CD8-positive, alpha-beta T cell (primary cell): ENCODE measurements at regions of chr6 and their contacts with region 1.

Region 1: DNA sequence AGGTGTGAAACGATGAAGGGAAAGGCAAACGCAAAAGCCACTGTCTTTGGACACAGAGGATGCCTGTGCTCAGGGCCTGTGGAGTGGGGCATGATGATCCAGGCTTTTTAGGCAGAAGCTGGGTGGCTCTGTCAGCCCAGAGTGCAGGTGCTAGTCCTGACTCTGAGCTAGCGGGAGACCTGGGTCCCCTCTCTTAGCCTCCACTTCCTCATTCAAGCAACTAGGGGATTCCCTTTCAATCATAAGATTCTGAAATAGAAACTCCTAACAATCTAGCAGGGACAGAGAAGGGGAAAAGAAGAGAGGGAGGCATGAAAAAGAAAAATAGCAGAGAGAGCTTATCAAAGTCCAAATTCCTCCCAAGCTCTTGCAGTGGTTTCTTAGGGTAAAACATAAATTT is 7.6 kb upstream of the HIVEP2 start:
- DNase-seq: peak in 1 of 9 experiments; percentile 24
- ATAC-seq: no peak
- H3K4me3 ChIP-seq: no peak overlapping the region
- H3K4me3 Mint-ChIP-seq: no peak overlapping the region
- H3K27ac ChIP-seq: no peak overlapping the region
- H3K27ac Mint-ChIP-seq: peak overlapping the region; percentile 79
- H3K4me1 ChIP-seq: no peaks in the 10 kb centered on the region
- H3K4me1 Mint-ChIP-seq: peaks cover 18% of the 10 kb centered on the region
- H3K27me3 ChIP-seq: no peaks in the 10 kb centered on the region
- H3K27me3 Mint-ChIP-seq: no peaks in the 10 kb centered on the region
- CTCF ChIP-seq: no peak

Region 2: DNA sequence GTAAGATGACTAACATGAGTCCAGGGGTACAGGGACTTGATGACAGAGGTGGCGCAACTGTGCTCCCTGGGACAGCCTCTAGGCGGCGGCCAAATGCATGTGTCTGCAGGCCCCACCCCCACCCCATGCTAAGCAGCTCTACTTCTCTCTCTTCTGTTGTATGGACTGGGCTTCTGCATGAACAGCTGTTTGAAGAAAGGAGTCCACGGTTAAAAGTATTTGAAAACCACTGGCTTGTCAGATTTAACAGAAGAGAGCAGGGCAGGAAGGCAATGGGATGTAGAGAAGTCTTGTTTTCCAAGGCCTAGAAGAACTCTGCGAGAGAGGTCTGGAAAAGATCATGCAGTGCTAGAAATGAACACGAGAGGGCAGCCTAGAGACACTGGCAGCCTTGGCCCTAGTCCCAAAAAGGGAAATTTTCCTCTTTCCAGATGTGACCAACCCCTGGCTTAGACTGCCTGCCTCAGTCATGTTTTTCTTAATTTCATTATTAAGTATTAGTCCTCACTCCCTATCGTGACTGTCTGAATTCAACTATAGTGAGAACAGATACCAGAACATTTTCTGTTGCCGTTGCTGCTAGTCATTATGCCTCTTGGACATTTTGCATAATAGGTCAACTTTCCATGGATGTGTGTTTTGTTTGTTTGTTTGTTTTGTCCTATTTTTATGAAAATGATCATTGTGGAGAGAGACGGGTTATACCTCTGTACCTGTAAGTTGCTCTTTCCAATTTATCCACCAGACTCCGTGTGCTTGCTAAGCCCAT is 385.8 kb before region 1 on chr6:
- CTCF ChIA-PET with region 1: no interaction called
- POLR2A ChIA-PET with region 1: no interaction called
- intact Hi-C with region 1: loop called in 1 of 2 experiments (anchors 10 kb)
- DNase-seq: peak; percentile 22 to 72 (median 58)
- ATAC-seq: peak; percentile 57
- H3K4me3 ChIP-seq: no peak overlapping the region
- H3K4me3 Mint-ChIP-seq: no peak overlapping the region
- H3K27ac ChIP-seq: no peak overlapping the region
- H3K27ac Mint-ChIP-seq: no peak overlapping the region
- H3K4me1 ChIP-seq: peaks cover 47% of the 10 kb centered on the region
- H3K4me1 Mint-ChIP-seq: peaks cover 61% of the 10 kb centered on the region
- H3K27me3 ChIP-seq: no peaks in the 10 kb centered on the region
- H3K27me3 Mint-ChIP-seq: no peaks in the 10 kb centered on the region
- CTCF ChIP-seq: peak; percentile 75

Region 3: GRCh38 chr6:142746524-142746923 is 206.1 kb before region 1 on chr6:
- CTCF ChIA-PET with region 1: interaction called, 4 read pairs
- POLR2A ChIA-PET with region 1: no interaction called
- intact Hi-C with region 1: loop called (anchors 1 to 5 kb)
- DNase-seq: peak in 8 of 9 experiments; percentile 6 to 71 (median 39)
- ATAC-seq: peak; percentile 58
- H3K4me3 ChIP-seq: no peak overlapping the region
- H3K4me3 Mint-ChIP-seq: no peak overlapping the region
- H3K27ac ChIP-seq: no peak overlapping the region
- H3K27ac Mint-ChIP-seq: no peak overlapping the region
- H3K4me1 ChIP-seq: peaks cover 6% of the 10 kb centered on the region
- H3K4me1 Mint-ChIP-seq: peaks cover 15% of the 10 kb centered on the region
- H3K27me3 ChIP-seq: no peaks in the 10 kb centered on the region
- H3K27me3 Mint-ChIP-seq: no peaks in the 10 kb centered on the region
- CTCF ChIP-seq: peak; percentile 42

Region 4: DNA sequence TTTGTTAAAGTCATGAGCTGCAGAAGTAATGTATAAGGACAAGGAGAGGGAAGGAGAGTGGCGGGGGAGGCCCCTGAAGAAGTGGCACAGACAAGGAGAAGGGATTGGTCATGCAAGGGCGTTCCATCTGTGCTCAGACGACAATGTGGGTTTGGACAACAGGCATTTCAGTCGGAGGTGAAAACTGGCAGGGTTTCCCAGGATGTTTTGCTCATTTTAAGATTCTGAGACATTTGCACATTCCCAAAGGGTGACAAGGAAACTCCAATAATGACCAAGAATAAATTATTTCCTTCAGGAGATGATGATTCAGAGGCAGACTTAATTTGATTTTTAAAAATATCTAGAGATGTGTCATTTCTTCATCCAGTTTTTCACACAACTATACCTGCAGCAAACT is 189.4 kb before region 1 on chr6:
- CTCF ChIA-PET with region 1: interaction called, 3 read pairs
- POLR2A ChIA-PET with region 1: no interaction called
- intact Hi-C with region 1: loop called in 1 of 2 experiments (anchors 5 kb)
- DNase-seq: no peak
- ATAC-seq: no peak
- H3K4me3 ChIP-seq: no peak overlapping the region
- H3K4me3 Mint-ChIP-seq: no peak overlapping the region
- H3K27ac ChIP-seq: no peak overlapping the region
- H3K27ac Mint-ChIP-seq: peak overlapping the region; percentile 74
- H3K4me1 ChIP-seq: peaks cover 3% of the 10 kb centered on the region
- H3K4me1 Mint-ChIP-seq: peaks cover 37% of the 10 kb centered on the region
- H3K27me3 ChIP-seq: no peaks in the 10 kb centered on the region
- H3K27me3 Mint-ChIP-seq: no peaks in the 10 kb centered on the region
- CTCF ChIP-seq: no peak

Region 5: GRCh38 chr6:142913511-142914047 is 39.0 kb before region 1 on chr6:
- CTCF ChIA-PET with region 1: no interaction called
- POLR2A ChIA-PET with region 1: interaction called, 3 read pairs
- intact Hi-C with region 1: loop called in 1 of 2 experiments (anchors 5 kb)
- DNase-seq: peak; percentile 39 to 92 (median 73)
- ATAC-seq: peak; percentile 90
- H3K4me3 ChIP-seq: peak overlapping the region; percentile 41 to 43
- H3K4me3 Mint-ChIP-seq: peak overlapping the region; percentile 82
- H3K27ac ChIP-seq: peak overlapping the region; percentile 78 to 95
- H3K27ac Mint-ChIP-seq: peak overlapping the region; percentile 99
- H3K4me1 ChIP-seq: peaks cover 74% of the 10 kb centered on the region
- H3K4me1 Mint-ChIP-seq: peaks cover 82% of the 10 kb centered on the region
- H3K27me3 ChIP-seq: no peaks in the 10 kb centered on the region
- H3K27me3 Mint-ChIP-seq: no peaks in the 10 kb centered on the region
- CTCF ChIP-seq: peak; percentile 50